Activated B cell treated with CpG ODN at 0.5 μM for 24 hours (primary cell): ENCODE measurements at regions of chr7 and their contacts with region 1.

Region 1: GRCh38 chr7:26101361-26102151 is 50.4 kb upstream of the NFE2L3 start:
- DNase-seq: peak; percentile 35
- ATAC-seq: peak; percentile 76
- H3K4me3 Mint-ChIP-seq: peak overlapping the region; percentile 92
- H3K27ac Mint-ChIP-seq: peak overlapping the region; percentile 95
- H3K4me1 Mint-ChIP-seq: peaks cover 49% of the 10 kb centered on the region
- H3K27me3 Mint-ChIP-seq: no peaks in the 10 kb centered on the region
- CTCF ChIP-seq: no peak

Region 2: GRCh38 chr7:26046150-26046549 is 55.4 kb before region 1 on chr7:
- CTCF ChIA-PET with region 1: no interaction called
- POLR2A ChIA-PET with region 1: no interaction called
- intact Hi-C with region 1: loop called (anchors 10 kb)
- DNase-seq: no peak
- ATAC-seq: no peak
- H3K4me3 Mint-ChIP-seq: no peak overlapping the region
- H3K27ac Mint-ChIP-seq: no peak overlapping the region
- H3K4me1 Mint-ChIP-seq: no peaks in the 10 kb centered on the region
- H3K27me3 Mint-ChIP-seq: peaks cover 24% of the 10 kb centered on the region
- CTCF ChIP-seq: no peak

Region 3: GRCh38 chr7:26127411-26127810 is 25.9 kb after region 1 on chr7:
- CTCF ChIA-PET with region 1: no interaction called
- POLR2A ChIA-PET with region 1: interaction called, 7 read pairs
- intact Hi-C with region 1: loop called (anchors 2 kb)
- DNase-seq: no peak
- ATAC-seq: peak; percentile 88
- H3K4me3 Mint-ChIP-seq: peak overlapping the region; percentile 21
- H3K27ac Mint-ChIP-seq: no peak overlapping the region
- H3K4me1 Mint-ChIP-seq: peaks cover 18% of the 10 kb centered on the region
- H3K27me3 Mint-ChIP-seq: peaks cover 12% of the 10 kb centered on the region
- CTCF ChIP-seq: no peak